OCI-LY7 (cell line): ENCODE measurements at regions of chr10 and their contacts with region 1.

Region 1: DNA sequence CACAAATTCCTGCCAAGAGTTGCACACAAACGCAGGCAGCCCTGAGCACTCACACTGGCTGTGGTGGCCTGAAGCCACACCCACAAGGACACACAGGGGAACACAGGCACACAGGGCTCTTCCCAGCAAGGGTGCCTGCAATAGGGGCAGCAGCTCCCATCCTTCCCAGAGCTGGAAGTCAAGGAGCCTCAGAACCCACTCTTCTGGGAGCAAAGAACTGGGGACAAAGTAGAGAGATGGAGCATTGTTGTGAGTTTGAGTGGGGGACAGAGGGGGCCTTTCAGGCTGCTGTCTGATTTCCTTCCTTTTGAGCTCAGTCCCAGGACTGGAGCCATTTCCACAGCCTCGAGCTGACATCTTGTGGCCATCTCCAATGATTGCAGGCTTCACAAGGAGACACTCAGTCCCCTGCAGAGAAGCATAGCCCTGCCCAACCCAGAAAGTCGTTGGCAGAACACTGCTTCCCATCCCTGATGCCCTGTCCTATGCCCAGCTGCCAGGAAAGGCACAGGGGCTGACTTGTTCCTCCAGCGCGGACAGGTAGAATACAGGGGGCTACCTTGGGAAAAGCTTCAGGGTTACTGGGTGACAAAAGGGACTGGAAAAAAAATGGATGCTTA is 34.4 kb upstream of the SLF2 start:
- DNase-seq: peak; percentile 86
- H3K4me3 ChIP-seq: no peak overlapping the region
- H3K27ac ChIP-seq: no peak overlapping the region
- H3K4me1 ChIP-seq: peaks cover 35% of the 10 kb centered on the region
- CTCF ChIP-seq: peak; percentile 89

Region 2: DNA sequence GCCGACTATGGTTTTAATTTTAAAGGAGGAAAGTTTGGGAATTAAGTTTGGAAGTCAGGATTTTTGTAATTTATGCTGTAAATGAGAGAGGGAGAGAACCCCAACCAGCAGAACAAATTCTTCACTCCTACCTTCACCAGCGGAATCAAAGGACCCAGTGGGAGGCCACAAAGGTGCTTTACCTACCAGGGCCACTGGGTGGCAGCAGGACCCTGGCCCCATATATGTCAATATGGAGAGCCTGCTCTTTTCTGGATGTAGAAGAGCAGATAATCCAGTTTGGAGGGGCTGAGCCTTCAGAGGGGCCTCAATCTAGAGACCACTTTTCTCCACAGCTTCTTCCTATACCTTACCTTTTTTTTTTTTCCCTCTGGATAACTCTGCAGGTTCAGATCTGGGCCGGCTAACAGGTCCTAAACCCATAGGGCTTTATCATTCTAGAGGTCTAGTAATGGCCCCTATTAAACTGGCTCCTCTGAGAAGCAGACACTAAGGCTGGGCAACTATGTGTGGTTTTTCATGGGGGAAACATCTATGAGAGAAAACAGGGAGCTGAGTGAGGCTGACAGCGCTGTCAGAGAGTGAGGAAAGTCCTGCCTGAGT is 539.9 kb before region 1 on chr10:
- CTCF ChIA-PET with region 1: no interaction called
- POLR2A ChIA-PET with region 1: no interaction called
- intact Hi-C with region 1: loop called (anchors 10 kb)
- DNase-seq: peak; percentile 81
- H3K4me3 ChIP-seq: peak overlapping the region; percentile 24
- H3K27ac ChIP-seq: peak overlapping the region; percentile 59
- H3K4me1 ChIP-seq: peaks cover 23% of the 10 kb centered on the region
- CTCF ChIP-seq: peak; percentile 95

Region 3: GRCh38 chr10:100502926-100503494 is 375.4 kb before region 1 on chr10:
- CTCF ChIA-PET with region 1: no interaction called
- POLR2A ChIA-PET with region 1: no interaction called
- intact Hi-C with region 1: no loop called
- DNase-seq: no peak
- H3K4me3 ChIP-seq: no peak overlapping the region
- H3K27ac ChIP-seq: no peak overlapping the region
- H3K4me1 ChIP-seq: peaks cover 19% of the 10 kb centered on the region
- CTCF ChIP-seq: no peak

Region 4: GRCh38 chr10:100562008-100562711 is 316.2 kb before region 1 on chr10:
- CTCF ChIA-PET with region 1: no interaction called
- POLR2A ChIA-PET with region 1: no interaction called
- intact Hi-C with region 1: loop called (anchors 10 kb)
- DNase-seq: no peak
- H3K4me3 ChIP-seq: no peak overlapping the region
- H3K27ac ChIP-seq: no peak overlapping the region
- H3K4me1 ChIP-seq: no peaks in the 10 kb centered on the region
- CTCF ChIP-seq: peak; percentile 44

Region 5: DNA sequence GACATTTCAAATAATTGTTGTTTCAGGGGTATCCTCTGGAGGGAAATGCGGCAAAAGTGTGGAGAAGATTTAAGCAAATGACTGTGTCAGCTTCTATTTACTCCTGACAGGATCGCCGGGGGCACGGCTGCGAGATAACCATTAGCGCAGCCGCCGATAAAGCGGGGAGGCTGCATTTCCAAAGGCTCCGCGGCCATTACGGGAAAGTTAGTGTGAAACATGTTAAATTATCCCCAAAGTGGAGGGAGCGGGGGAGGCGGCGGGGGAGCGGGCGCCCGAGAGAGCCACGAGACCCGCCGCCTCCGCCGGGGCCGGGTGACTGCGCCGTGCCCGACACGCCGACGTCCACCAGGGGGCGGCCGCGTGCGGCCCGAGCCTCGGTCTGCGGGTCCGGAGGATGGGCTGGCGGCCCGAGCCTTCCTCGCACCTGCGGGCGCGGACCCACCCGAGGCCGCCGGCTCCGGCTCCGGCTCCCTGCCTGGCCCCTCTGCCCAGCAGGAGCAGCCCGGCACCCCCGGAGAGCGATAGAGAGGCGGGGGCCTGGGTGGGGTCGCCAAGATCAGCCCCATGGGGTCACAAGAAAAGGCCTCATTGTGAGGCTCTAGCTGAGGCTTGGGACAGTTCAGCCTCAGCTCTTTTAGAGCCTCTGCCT is 207.4 kb before region 1 on chr10:
- CTCF ChIA-PET with region 1: no interaction called
- POLR2A ChIA-PET with region 1: no interaction called
- intact Hi-C with region 1: loop called (anchors 1 kb)
- DNase-seq: peak; percentile 47
- H3K4me3 ChIP-seq: no peak overlapping the region
- H3K27ac ChIP-seq: no peak overlapping the region
- H3K4me1 ChIP-seq: no peaks in the 10 kb centered on the region
- CTCF ChIP-seq: peak; percentile 85

Region 6: GRCh38 chr10:100743626-100744135 is 134.7 kb before region 1 on chr10:
- CTCF ChIA-PET with region 1: no interaction called
- POLR2A ChIA-PET with region 1: no interaction called
- intact Hi-C with region 1: loop called (anchors 5 kb)
- DNase-seq: peak; percentile 70
- H3K4me3 ChIP-seq: no peak overlapping the region
- H3K27ac ChIP-seq: no peak overlapping the region
- H3K4me1 ChIP-seq: no peaks in the 10 kb centered on the region
- CTCF ChIP-seq: peak; percentile 85

Region 7: GRCh38 chr10:101367569-101368453 is 489.4 kb after region 1 on chr10:
- CTCF ChIA-PET with region 1: no interaction called
- POLR2A ChIA-PET with region 1: no interaction called
- intact Hi-C with region 1: no loop called
- DNase-seq: no peak
- H3K4me3 ChIP-seq: no peak overlapping the region
- H3K27ac ChIP-seq: no peak overlapping the region
- H3K4me1 ChIP-seq: no peaks in the 10 kb centered on the region
- CTCF ChIP-seq: no peak